ENCODE measurements at regions of chr11 and their contacts with region 1.

Region 1: GRCh38 chr11:85795712-85796487 is 15.0 kb downstream of the SYTL2 start:
- DNase-seq: no peak
- H3K4me3 ChIP-seq: no peak overlapping the region
- H3K27ac ChIP-seq: no peak overlapping the region
- H3K4me1 ChIP-seq: no peaks in the 10 kb centered on the region
- H3K27me3 ChIP-seq: no peaks in the 10 kb centered on the region
- CTCF ChIP-seq: no peak

Region 2: GRCh38 chr11:85740481-85741400 is 55.2 kb before region 1 on chr11:
- intact Hi-C with region 1: loop called (anchors 2 kb)
- DNase-seq: no peak
- H3K4me3 ChIP-seq: no peak overlapping the region
- H3K27ac ChIP-seq: no peak overlapping the region
- H3K4me1 ChIP-seq: no peaks in the 10 kb centered on the region
- H3K27me3 ChIP-seq: no peaks in the 10 kb centered on the region
- CTCF ChIP-seq: no peak

Region 3: DNA sequence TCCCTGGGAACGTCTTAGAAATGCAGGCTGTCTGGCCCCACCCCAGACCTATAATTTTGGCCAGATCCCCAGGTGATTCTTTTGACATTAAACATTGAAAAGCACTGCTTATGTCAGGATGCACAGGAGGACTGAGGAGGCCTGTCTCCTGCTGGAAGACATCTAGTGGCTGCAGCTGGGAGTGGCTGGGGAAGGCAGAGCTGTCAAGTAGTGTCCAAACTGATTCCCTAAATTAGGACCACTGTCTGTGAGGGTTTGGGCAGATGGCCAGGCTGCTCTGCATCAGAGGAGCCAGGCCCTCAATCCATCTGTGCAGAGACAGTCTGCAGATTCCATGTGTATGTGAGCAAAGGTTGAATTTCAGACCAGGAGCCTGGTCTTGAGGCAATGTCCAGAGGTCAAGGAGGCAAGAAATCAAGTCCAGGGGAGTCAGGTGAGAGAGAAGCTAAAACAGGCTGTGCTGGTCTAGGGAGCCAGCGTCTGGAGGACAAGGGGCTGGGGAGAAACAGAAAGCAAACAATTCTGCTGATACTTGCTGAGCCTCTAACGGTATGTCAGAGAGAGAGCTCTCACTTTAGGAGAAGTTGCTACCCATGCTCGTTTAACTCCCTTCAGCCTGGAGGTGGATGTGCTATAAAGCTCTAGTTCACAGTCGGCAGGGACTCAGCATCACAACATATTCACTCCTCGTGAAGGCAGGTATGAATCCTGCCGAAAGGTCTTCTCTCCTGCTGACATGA is 30.4 kb after region 1 on chr11:
- intact Hi-C with region 1: no loop called
- DNase-seq: no peak
- H3K4me3 ChIP-seq: no peak overlapping the region
- H3K27ac ChIP-seq: peak overlapping the region in 1 of 2 donors; percentile 65
- H3K4me1 ChIP-seq: peaks cover 0 to 14% of the 10 kb centered on the region in 2 donors
- H3K27me3 ChIP-seq: no peaks in the 10 kb centered on the region
- CTCF ChIP-seq: peak; percentile 11 to 26 (median 16)

Measured in ascending aorta (tissue), 2 donors.